Left lung (tissue), 14 donors: ENCODE measurements at regions of chr12 and their contacts with region 1.

Region 1: DNA sequence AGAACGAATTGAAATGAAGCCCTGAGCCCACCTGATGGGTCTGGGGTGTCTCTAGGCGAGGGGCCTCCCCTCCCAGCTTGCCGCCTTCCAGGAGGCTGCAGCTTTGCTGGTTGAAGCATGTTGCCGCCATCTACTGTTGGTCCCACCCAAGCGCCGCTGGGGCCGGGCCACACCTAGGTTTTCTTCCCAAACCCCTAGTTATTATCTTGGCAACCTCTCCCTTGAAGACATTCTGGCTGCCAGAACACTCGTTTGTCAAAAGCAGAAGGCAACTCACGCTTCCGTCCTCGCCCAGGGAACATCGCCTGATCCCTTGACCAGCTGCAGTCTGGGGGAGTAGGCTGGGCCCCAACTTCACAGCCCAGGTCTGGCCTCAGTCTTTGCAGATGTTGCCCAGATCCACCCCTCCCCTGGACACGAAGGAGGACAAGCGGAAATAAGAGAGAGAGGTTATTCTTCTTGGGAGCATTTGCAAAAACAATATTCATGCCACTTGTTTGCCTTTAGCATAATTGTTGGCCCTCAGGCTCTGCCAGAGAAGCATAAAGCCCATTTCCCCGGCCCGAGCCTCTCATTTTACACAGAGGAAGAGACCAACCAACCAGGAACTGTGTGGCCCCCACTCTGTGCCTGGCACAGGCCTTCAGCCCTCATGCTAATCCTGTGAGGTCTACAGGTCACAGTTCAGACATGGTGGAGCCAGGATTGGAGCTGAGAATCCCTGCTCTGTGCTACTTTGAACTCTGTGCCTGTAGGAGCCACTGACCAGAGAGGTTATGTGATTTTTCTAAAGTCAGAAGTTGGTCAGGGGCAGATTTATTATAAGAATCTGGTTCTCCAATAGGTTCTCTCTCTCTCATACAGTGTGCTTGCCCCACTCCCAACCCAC is 6.8 kb downstream of the EMP1 start:
- DNase-seq: peak in 1 of 4 donors; percentile 73
- ATAC-seq: peak; percentile 12
- H3K4me3 ChIP-seq: no peak overlapping the region
- H3K27ac ChIP-seq: peak overlapping the region in 1 of 2 donors; percentile 16
- H3K4me1 ChIP-seq: peaks cover 46 to 89% of the 10 kb centered on the region in 2 donors
- H3K27me3 ChIP-seq: no peaks in the 10 kb centered on the region
- CTCF ChIP-seq: no peak

Region 2: DNA sequence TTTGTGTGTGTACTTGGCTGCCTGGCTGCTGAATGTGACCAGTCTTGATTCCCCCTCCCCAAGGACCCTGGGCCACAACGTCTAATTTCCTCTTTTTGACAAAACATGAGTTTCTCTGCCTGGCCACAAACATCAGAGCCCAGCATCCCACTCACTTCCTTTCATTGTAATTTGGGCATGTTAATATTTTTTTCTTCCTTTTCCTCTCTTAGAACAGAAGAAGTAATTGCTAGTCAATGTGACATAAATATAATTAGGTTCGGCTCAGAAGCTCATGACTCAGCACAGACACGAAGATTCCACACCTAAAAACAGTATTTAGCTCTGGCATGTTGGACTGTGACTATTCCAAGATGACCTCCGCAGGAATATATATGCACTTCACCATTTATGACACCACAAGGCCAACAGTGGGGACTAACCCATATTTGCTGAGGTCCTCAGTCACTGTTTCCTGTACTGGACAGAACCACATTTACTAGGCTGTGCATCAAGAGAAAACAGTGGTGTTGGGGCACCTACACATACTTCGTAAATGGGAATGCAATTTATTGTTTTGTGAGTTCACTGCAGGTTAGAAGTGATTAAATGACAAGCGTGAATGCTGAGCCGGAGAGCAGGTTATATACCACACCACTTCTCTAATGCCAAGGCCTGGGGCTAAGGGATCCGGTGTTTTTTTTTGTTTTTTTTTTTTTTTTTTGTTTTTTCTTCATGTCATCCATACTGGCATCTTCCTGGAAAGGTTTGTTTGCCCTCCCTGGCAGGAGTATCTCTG is 104.0 kb before region 1 on chr12:
- intact Hi-C with region 1: loop called in 1 of 2 experiments (anchors 5 kb)
- DNase-seq: no peak
- ATAC-seq: no peak
- H3K4me3 ChIP-seq: no peak overlapping the region
- H3K27ac ChIP-seq: peak overlapping the region; percentile 81 to 100
- H3K4me1 ChIP-seq: peaks cover 44 to 78% of the 10 kb centered on the region in 2 donors
- H3K27me3 ChIP-seq: no peaks in the 10 kb centered on the region
- CTCF ChIP-seq: no peak

Region 3: GRCh38 chr12:13347241-13348043 is 144.2 kb after region 1 on chr12:
- intact Hi-C with region 1: no loop called
- DNase-seq: no peak
- ATAC-seq: peak; percentile 46
- H3K4me3 ChIP-seq: no peak overlapping the region
- H3K27ac ChIP-seq: no peak overlapping the region
- H3K4me1 ChIP-seq: no peaks in the 10 kb centered on the region
- H3K27me3 ChIP-seq: no peaks in the 10 kb centered on the region
- CTCF ChIP-seq: no peak